Prostate gland (tissue), 2 donors: ENCODE measurements at regions of chr20 and their contacts with region 1.

Region 1: DNA sequence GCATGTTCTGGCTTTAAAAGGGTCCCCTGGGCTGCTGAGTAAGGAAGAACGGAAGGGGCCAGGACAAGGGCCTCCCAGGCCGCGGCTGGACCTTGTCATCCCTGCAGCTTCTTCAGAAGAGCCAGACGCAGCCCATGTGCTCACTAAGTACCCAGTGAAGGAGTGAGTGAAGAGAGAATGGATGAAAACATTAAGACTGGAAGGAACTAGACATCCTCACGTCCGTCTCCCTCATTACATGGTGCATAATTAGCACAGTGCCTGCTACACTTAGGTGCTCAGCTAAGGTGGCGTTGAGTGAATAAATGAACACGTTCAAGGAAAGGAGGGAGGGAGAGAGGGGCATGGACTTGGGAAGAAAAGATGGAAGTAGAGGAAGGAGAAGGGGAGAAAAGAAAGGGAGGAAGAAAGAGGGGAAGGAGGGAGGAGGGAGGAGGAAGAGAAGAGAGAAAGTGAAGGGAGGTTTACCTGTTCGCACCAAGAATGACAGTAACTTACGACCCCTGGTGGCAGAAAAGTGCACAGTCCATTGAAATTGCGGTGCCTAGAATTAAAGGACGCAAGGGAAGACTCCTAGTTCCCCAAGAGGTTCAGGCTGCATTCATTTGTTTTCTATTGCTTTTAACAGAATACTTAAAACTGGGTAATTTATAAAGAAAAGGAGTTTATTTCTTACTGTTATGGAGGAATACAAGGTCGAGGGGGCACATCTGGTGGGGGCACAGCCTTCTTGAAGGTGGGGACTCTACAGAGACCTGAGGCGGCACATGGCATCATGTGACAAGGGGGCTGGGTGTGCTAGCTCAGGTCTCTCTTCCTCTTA is 8.0 kb downstream of the TP53RK start:
- DNase-seq: peak; percentile 75
- H3K4me3 ChIP-seq: no peak overlapping the region
- H3K27ac ChIP-seq: no peak overlapping the region
- H3K4me1 ChIP-seq: peaks cover 6% of the 10 kb centered on the region
- H3K27me3 ChIP-seq: no peaks in the 10 kb centered on the region
- CTCF ChIP-seq: peak; percentile 82 to 91 (median 85)
- POLR2A ChIP-seq: no peak

Region 2: DNA sequence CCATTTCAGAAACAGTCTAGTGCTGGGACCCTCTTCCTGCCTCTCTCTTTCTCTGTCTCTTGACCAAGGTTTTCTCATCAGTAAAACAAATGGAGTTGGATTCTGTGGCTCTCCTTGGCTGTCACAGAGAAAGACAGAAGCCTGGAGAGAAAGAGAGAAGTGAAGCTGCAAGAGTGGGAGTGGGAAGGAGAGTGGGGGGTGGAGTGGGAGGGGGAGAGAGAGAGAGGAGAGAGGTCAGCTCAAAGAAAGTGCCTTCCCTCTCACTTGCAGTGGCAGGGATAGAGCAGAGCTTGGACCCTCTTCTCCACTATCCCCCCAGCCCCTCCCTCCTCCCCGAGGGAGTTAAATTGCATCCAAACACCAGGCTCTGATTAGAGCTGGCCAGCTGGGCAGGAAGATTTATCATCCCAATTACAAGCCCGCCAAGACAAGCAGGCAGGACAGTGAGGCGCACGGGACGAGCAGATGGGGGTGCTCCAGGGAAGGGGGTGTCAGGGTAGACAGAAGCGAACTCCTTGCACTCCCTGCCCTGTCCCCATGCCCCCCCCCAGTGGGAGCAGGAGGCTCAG is 488.8 kb before region 1 on chr20:
- intact Hi-C with region 1: no loop called
- DNase-seq: no peak
- H3K4me3 ChIP-seq: no peak overlapping the region
- H3K27ac ChIP-seq: no peak overlapping the region
- H3K4me1 ChIP-seq: no peaks in the 10 kb centered on the region
- H3K27me3 ChIP-seq: no peaks in the 10 kb centered on the region
- CTCF ChIP-seq: no peak
- POLR2A ChIP-seq: no peak

Region 3: GRCh38 chr20:46520976-46521579 is 160.2 kb before region 1 on chr20:
- intact Hi-C with region 1: loop called (anchors 5 kb)
- DNase-seq: peak; percentile 51
- H3K4me3 ChIP-seq: no peak overlapping the region
- H3K27ac ChIP-seq: no peak overlapping the region
- H3K4me1 ChIP-seq: no peaks in the 10 kb centered on the region
- H3K27me3 ChIP-seq: no peaks in the 10 kb centered on the region
- CTCF ChIP-seq: peak in 3 of 4 experiments; percentile 60 to 83 (median 74)
- POLR2A ChIP-seq: no peak

Region 4: DNA sequence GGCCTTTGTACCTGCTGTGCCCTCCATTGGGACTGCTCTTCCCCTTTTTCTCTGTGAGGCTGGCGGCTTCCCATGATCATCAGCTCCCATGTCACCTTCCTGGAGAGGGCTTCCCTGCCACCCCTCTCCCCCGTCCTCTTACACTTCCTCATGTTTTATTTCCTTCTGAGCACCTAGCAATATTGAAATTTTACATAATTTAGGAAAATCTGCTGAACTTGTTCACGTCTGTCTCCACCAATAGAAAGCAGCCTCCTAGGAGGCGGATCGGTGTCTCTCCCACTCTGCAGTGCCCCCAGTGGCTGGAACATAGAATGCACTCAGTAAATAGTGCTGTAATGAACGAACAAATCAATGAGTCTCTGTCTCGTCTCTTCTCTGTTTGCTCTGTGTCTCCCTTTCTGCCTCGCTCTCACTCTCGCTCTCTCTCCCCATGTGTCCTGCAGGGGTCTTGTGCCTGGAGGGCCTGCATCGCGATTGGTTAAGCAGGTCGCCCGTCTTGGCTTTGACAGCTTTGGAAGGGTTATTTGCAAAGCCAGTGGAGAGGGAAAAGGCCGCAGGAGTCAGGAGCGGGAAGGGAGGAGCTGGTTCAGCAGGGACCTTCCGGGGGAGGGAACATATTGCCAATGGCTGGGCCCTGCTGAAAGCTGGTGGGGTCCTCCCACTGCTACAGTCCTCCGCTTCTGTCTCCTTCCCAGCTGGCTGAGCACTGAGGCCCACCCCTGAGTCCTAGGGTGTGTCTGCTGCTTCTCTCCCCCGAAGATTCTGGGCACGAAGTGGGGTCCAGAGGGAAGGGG is 118.7 kb before region 1 on chr20:
- intact Hi-C with region 1: loop called (anchors 5 kb)
- DNase-seq: peak; percentile 65
- H3K4me3 ChIP-seq: no peak overlapping the region
- H3K27ac ChIP-seq: peak overlapping the region; percentile 4 to 9
- H3K4me1 ChIP-seq: no peaks in the 10 kb centered on the region
- H3K27me3 ChIP-seq: no peaks in the 10 kb centered on the region
- CTCF ChIP-seq: peak; percentile 64 to 86 (median 83)
- POLR2A ChIP-seq: no peak

Region 5: GRCh38 chr20:46894971-46895905 is 214.0 kb after region 1 on chr20:
- intact Hi-C with region 1: no loop called
- DNase-seq: peak; percentile 71
- H3K4me3 ChIP-seq: peak overlapping the region; percentile 77 to 83
- H3K27ac ChIP-seq: peak overlapping the region; percentile 91 to 93
- H3K4me1 ChIP-seq: no peaks in the 10 kb centered on the region
- H3K27me3 ChIP-seq: no peaks in the 10 kb centered on the region
- CTCF ChIP-seq: no peak
- POLR2A ChIP-seq: peak; percentile 44